ENCODE measurements at regions of chr3 and their contacts with region 1.

Region 1: DNA sequence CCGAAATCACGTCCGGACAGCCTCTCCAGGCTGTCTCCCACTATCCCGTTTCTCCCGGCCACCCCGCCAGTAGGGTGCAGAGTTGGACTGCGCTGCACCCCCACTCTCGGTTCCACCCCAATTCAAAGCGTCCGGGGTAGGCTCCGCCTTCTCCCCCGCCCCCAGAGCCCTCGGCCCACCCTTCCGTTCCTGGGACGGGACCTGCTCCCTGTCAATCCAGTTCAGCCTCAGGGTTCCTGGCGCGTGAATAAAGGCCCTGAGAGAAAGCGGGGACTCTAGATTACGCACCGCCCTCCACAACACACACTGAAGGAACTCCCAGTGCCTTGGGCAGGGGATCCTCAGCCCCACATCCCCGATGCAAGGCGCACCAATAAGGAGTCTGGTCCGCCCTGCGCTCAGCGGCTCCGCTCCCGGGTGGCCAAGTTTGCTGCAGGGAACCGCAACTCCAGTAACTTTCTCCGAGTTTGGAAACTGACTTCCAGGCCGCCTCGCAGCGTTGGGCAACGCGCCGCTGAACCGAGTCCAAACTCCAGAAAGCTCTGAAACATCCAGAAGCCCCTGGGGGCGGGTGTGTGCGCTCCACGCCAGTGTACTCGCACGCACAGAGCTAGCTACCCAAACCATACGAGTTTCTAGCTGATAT is 1.9 kb downstream of the ADAMTS9 start:
- DNase-seq: peak; percentile 93 to 97
- ATAC-seq: peak; percentile 87 to 95 (median 92)
- H3K4me3 ChIP-seq: peak overlapping the region; percentile 42 to 90 (median 72)
- H3K27ac ChIP-seq: peak overlapping the region; percentile 75 to 99 (median 96)
- H3K4me1 ChIP-seq: peaks cover 0 to 47% (median 23%) of the 10 kb centered on the region in 9 donors
- H3K27me3 ChIP-seq: peaks cover 0 to 34% (median 0%) of the 10 kb centered on the region in 7 donors
- CTCF ChIP-seq: peak in 8 of 9 donors; percentile 48 to 80 (median 62)

Region 2: GRCh38 chr3:64612082-64612860 is 73.7 kb before region 1 on chr3:
- intact Hi-C with region 1: loop called in 1 of 10 experiments (anchors 5 kb)
- DNase-seq: peak in 1 of 2 donors; percentile 57
- ATAC-seq: peak; percentile 73 to 95 (median 88)
- H3K4me3 ChIP-seq: peak overlapping the region in 2 of 10 donors; percentile 0 to 3
- H3K27ac ChIP-seq: peak overlapping the region; percentile 26 to 87 (median 73)
- H3K4me1 ChIP-seq: peaks cover 4 to 56% (median 38%) of the 10 kb centered on the region in 9 donors
- H3K27me3 ChIP-seq: no peaks in the 10 kb centered on the region
- CTCF ChIP-seq: no peak

Region 3: DNA sequence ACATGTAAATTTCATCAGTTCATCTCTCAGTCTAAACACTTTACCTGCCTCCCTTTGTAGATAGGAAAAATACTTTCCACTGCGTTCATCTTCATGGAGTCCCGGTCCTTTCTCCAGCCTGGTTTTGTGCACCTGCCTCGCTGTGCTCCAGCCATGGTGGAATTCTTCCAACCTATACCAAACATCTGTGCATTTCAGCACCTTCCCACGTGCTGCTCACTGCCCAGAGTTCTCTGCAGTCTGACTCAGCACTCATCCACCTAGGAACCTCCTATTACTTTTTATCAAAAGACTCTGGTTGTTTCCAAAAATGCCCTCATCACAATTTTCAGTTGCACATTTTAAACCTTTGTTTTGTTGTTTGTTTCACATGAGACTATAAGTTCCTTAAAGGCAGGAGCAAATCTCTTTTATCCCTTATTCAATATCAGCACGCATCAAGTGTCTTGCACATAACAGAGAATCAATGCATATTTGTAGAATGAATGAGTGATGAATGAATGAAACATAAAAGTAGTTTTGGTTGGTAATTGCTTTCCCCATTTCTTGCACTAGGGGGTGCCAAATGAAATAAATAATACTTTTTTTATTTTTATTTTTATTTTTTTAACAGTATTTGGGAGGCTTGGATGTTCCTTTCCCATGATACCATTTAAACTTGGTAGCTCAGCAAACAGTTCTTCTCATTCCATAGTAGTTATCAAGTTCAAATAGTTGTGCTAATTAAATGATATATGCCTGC is 32.1 kb after region 1 on chr3:
- intact Hi-C with region 1: no loop called
- DNase-seq: no peak
- ATAC-seq: no peak
- H3K4me3 ChIP-seq: no peak overlapping the region
- H3K27ac ChIP-seq: no peak overlapping the region
- H3K4me1 ChIP-seq: peaks cover 0 to 29% (median 14%) of the 10 kb centered on the region in 9 donors
- H3K27me3 ChIP-seq: no peaks in the 10 kb centered on the region
- CTCF ChIP-seq: peak in 8 of 9 donors; percentile 23 to 65 (median 54)

Region 4: DNA sequence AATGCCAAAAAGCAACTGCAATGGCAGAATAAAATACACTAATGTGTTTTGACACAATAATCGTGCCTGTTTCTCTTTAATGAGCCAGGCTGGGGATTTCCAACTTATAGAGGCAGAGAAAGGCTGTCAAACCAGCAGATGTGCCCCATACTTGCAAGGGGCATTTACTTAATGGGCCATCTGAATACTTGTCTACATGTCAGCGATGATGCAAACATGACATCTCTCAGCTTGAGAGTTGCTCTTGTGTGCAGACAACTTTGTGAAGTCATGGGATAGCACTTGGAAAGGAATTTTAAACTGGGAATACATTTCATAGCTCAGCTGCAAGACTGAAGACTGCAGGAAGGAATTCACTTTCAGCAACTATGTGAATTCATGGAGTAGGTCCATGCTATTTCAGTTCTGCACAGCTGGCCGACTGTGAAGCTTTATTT is 129.3 kb after region 1 on chr3:
- intact Hi-C with region 1: loop called in 1 of 10 experiments (anchors 5 kb)
- DNase-seq: peak in 1 of 2 donors; percentile 36
- ATAC-seq: peak in 7 of 8 donors; percentile 83 to 92 (median 86)
- H3K4me3 ChIP-seq: peak overlapping the region in 1 of 10 donors; percentile 28
- H3K27ac ChIP-seq: peak overlapping the region in 9 of 10 donors; percentile 24 to 72 (median 54)
- H3K4me1 ChIP-seq: peaks cover 0 to 37% (median 29%) of the 10 kb centered on the region in 9 donors
- H3K27me3 ChIP-seq: no peaks in the 10 kb centered on the region
- CTCF ChIP-seq: peak in 2 of 9 donors; percentile 16 to 19

Region 5: DNA sequence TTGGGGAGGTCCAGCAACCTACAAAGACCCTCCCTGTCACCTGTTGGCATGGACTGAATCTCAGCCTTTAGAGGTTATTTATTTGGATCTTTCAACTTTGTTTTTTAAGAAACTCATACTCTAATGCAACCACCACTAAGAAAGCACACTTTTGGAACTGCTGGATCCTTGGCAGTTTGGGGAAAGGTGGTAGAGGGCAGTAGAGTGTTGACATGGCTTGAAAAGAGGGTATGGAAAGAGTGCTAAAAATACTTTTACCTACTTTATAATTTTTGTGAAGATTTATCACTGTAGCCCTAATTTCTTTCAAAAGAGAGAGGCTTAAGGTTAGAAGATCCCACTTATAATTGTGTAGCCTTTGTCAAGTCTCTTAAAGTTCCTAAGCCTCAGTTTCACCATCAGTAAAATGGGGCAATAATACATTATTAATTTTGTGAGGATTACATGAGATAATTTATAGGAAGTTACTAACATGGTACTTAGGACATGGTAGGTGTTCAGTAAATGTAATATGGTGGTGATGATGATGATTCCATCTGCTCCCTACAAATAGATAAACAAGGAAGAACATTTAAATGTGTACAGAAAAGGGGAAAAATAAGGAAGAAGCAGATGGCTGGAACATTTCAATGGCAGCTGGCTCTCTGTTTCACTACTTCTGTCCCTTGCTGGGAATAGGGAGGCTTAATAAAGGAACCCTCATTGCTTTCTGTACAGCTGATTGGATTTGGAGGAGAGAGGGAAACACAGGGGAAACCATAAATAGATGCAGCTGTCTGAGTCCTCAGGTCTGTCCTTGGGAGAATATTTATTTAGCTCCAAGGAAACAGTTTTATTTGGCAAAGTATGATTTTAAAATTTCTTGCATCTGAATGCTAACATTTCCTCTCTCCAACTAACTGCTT is 210.3 kb after region 1 on chr3:
- intact Hi-C with region 1: loop called in 5 of 10 experiments (anchors 5 to 10 kb)
- DNase-seq: no peak
- ATAC-seq: peak; percentile 32 to 80 (median 68)
- H3K4me3 ChIP-seq: no peak overlapping the region
- H3K27ac ChIP-seq: peak overlapping the region in 9 of 10 donors; percentile 29 to 91 (median 42)
- H3K4me1 ChIP-seq: peaks cover 4 to 85% (median 45%) of the 10 kb centered on the region in 9 donors
- H3K27me3 ChIP-seq: no peaks in the 10 kb centered on the region
- CTCF ChIP-seq: peak in 2 of 9 donors; percentile 7 to 19

Region 6: GRCh38 chr3:64908292-64908691 is 222.4 kb after region 1 on chr3:
- intact Hi-C with region 1: loop called in 6 of 10 experiments (anchors 1 to 10 kb)
- DNase-seq: peak in 1 of 2 donors; percentile 73
- ATAC-seq: peak; percentile 76 to 94 (median 91)
- H3K4me3 ChIP-seq: no peak overlapping the region
- H3K27ac ChIP-seq: peak overlapping the region in 9 of 10 donors; percentile 5 to 84 (median 75)
- H3K4me1 ChIP-seq: peaks cover 1 to 69% (median 46%) of the 10 kb centered on the region in 9 donors
- H3K27me3 ChIP-seq: no peaks in the 10 kb centered on the region
- CTCF ChIP-seq: no peak

Region 7: GRCh38 chr3:65170390-65171042 is 484.6 kb after region 1 on chr3:
- intact Hi-C with region 1: loop called in 7 of 10 experiments (anchors 5 kb)
- DNase-seq: peak; percentile 81 to 91
- ATAC-seq: peak; percentile 68 to 98 (median 94)
- H3K4me3 ChIP-seq: no peak overlapping the region
- H3K27ac ChIP-seq: peak overlapping the region in 9 of 10 donors; percentile 16 to 91 (median 76)
- H3K4me1 ChIP-seq: peaks cover 5 to 32% (median 19%) of the 10 kb centered on the region in 9 donors
- H3K27me3 ChIP-seq: no peaks in the 10 kb centered on the region
- CTCF ChIP-seq: peak; percentile 17 to 69 (median 55)

Region 8: GRCh38 chr3:65412588-65412987 is 726.7 kb after region 1 on chr3:
- intact Hi-C with region 1: loop called in 2 of 10 experiments (anchors 10 kb)
- DNase-seq: peak; percentile 40 to 87
- ATAC-seq: peak; percentile 79 to 95 (median 89)
- H3K4me3 ChIP-seq: no peak overlapping the region
- H3K27ac ChIP-seq: peak overlapping the region in 4 of 10 donors; percentile 67 to 80 (median 70)
- H3K4me1 ChIP-seq: peaks cover 14 to 61% (median 48%) of the 10 kb centered on the region in 9 donors
- H3K27me3 ChIP-seq: no peaks in the 10 kb centered on the region
- CTCF ChIP-seq: peak in 7 of 9 donors; percentile 27 to 70 (median 42)

Measured in heart right ventricle (tissue), 16 donors.